ENCODE measurements at regions of chr11 and their contacts with region 1.

Region 1: GRCh38 chr11:10770626-10771254 is 19.7 kb downstream of the CTR9 start:
- DNase-seq: peak; percentile 71
- H3K4me3 ChIP-seq: no peak overlapping the region
- H3K27ac ChIP-seq: no peak overlapping the region
- H3K4me1 ChIP-seq: no peaks in the 10 kb centered on the region
- H3K27me3 ChIP-seq: no peaks in the 10 kb centered on the region
- CTCF ChIP-seq: peak; percentile 69 to 75
- POLR2A ChIP-seq: no peak

Region 2: GRCh38 chr11:10784232-10785145 is 13.7 kb after region 1 on chr11:
- CTCF ChIA-PET with region 1: interaction called, 13 read pairs
- POLR2A ChIA-PET with region 1: no interaction called
- dilution Hi-C with region 1: no loop called
- intact Hi-C with region 1: no loop called
- DNase-seq: peak; percentile 81
- H3K4me3 ChIP-seq: no peak overlapping the region
- H3K27ac ChIP-seq: peak overlapping the region; percentile 63
- H3K4me1 ChIP-seq: peaks cover 19% of the 10 kb centered on the region
- H3K27me3 ChIP-seq: no peaks in the 10 kb centered on the region
- CTCF ChIP-seq: no peak
- POLR2A ChIP-seq: no peak

Region 3: GRCh38 chr11:10878408-10879214 is 107.9 kb after region 1 on chr11:
- CTCF ChIA-PET with region 1: no interaction called
- POLR2A ChIA-PET with region 1: no interaction called
- dilution Hi-C with region 1: no loop called
- intact Hi-C with region 1: no loop called
- DNase-seq: peak; percentile 69
- H3K4me3 ChIP-seq: no peak overlapping the region
- H3K27ac ChIP-seq: no peak overlapping the region
- H3K4me1 ChIP-seq: no peaks in the 10 kb centered on the region
- H3K27me3 ChIP-seq: no peaks in the 10 kb centered on the region
- CTCF ChIP-seq: peak; percentile 68 to 77
- POLR2A ChIP-seq: no peak